Prostate gland (tissue), 2 donors: ENCODE measurements at regions of chr18 and their contacts with region 1.

Region 1: GRCh38 chr18:45014047-45014501 is 333.4 kb downstream of the SETBP1 start:
- DNase-seq: no peak
- H3K4me3 ChIP-seq: no peak overlapping the region
- H3K27ac ChIP-seq: peak overlapping the region in 1 of 2 donors; percentile 8
- H3K4me1 ChIP-seq: no peaks in the 10 kb centered on the region
- H3K27me3 ChIP-seq: no peaks in the 10 kb centered on the region
- CTCF ChIP-seq: peak in 1 of 4 experiments; percentile 8
- POLR2A ChIP-seq: no peak

Region 2: DNA sequence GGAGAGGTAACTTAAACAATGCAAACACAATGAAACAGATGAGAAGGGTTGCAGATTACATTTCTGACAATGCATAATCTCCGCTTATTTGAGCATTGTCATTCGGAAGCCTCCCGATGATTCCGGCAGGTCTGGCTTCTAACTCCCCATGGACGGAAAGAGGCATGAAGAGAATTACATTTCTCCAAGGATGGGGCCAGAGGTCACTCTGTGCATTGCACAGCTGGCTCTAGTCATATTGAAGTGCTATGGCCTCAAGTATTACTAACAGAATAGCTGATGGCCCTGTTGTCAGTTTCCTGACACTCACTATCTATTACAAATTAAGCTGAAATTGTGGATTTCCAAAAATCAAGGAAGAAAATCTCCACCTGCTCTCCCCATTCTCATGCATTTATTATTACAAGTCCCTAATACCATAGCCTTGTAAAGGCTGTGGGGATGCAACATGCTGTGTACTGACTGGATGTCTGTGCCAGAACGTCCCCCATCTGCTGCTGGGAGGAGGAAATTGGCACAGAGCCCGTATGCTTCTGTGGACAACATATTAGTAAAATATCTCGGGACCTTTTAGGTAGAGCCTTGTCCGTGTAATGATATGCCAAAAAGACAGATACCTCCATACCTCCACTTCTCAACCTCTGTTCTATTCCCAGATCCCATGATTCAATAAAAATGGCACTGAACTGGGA is 165.3 kb before region 1 on chr18:
- intact Hi-C with region 1: loop called (anchors 10 kb)
- DNase-seq: no peak
- H3K4me3 ChIP-seq: no peak overlapping the region
- H3K27ac ChIP-seq: no peak overlapping the region
- H3K4me1 ChIP-seq: no peaks in the 10 kb centered on the region
- H3K27me3 ChIP-seq: no peaks in the 10 kb centered on the region
- CTCF ChIP-seq: no peak
- POLR2A ChIP-seq: no peak

Region 3: DNA sequence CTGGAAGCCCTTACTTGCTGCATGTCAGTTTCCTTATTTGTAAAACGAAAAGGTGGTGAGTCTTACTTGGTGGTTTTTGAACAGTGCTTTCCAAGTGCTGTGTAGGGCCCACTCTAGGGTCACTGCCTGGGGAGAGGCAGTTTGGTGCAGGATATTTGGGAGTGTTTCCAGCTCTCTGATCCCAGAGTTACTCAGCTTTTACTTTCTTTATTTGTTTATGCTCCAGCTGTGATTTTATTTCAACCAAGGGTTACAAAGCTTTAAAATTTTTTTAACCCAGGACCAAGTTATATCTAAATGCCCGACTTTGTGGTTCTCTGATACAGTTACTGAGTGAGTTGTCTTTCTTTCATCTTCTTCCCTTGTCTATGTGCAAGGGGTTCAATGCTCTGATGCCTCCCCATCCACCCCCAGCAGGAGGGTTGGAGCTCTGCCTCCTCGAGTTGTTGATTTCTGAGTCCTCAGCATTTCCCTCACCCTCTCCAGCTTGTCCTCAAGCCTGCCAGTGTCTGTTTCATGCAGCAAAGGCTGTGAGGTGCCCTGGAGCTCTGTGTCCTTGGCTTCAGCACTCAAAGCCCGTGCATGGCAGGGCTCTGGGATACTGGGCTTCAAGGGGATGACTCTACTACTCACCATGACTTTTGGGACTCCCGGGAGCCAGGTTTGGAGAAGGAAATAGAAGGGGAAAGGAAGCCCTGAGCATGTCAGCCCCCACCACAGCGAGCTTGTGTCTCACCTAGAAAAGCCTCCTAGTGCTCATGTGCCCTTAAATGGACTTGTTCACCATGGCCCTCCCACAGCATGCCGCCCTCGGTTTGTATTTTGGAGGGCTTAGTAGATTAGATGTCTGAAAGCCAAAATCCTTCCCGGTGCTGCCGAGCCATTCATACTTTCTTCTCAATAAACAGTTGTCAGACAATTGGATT is 96.6 kb before region 1 on chr18:
- intact Hi-C with region 1: loop called (anchors 10 kb)
- DNase-seq: no peak
- H3K4me3 ChIP-seq: no peak overlapping the region
- H3K27ac ChIP-seq: peak overlapping the region; percentile 47 to 51
- H3K4me1 ChIP-seq: no peaks in the 10 kb centered on the region
- H3K27me3 ChIP-seq: no peaks in the 10 kb centered on the region
- CTCF ChIP-seq: no peak
- POLR2A ChIP-seq: no peak

Region 4: GRCh38 chr18:45059695-45060094 is 45.6 kb after region 1 on chr18:
- intact Hi-C with region 1: loop called (anchors 10 kb)
- DNase-seq: no peak
- H3K4me3 ChIP-seq: no peak overlapping the region
- H3K27ac ChIP-seq: no peak overlapping the region
- H3K4me1 ChIP-seq: no peaks in the 10 kb centered on the region
- H3K27me3 ChIP-seq: no peaks in the 10 kb centered on the region
- CTCF ChIP-seq: no peak
- POLR2A ChIP-seq: no peak

Region 5: DNA sequence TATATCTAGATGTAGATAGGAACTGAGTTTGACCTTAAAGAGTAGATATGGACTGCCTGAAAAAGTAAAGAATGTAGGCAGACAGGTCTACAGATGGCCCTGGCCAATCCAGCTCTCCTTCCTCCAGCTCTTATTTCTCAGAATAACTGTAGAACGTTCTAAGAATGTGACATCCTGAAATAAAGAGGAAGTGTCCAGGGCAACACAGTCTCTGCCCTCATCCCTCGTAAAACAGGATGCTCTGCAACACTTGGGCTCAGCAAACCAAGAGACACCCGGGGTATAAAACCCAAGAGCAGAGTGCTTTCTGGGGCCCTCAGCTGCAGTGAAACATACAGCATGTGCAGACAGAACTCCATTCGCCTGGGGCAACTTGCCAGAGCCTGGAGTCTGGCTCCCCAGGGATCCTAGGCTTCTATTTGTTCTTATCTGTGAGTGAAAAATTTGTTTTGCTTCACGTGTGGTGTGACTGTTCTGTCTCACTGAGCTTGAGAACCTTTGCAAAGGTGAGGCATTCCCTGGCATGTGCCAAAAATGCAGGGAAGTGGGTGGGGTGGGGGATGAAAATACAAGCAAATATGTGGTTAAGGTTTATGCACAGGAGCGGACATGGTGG is 67.6 kb after region 1 on chr18:
- intact Hi-C with region 1: loop called (anchors 5 kb)
- DNase-seq: no peak
- H3K4me3 ChIP-seq: no peak overlapping the region
- H3K27ac ChIP-seq: no peak overlapping the region
- H3K4me1 ChIP-seq: no peaks in the 10 kb centered on the region
- H3K27me3 ChIP-seq: no peaks in the 10 kb centered on the region
- CTCF ChIP-seq: no peak
- POLR2A ChIP-seq: no peak

Region 6: DNA sequence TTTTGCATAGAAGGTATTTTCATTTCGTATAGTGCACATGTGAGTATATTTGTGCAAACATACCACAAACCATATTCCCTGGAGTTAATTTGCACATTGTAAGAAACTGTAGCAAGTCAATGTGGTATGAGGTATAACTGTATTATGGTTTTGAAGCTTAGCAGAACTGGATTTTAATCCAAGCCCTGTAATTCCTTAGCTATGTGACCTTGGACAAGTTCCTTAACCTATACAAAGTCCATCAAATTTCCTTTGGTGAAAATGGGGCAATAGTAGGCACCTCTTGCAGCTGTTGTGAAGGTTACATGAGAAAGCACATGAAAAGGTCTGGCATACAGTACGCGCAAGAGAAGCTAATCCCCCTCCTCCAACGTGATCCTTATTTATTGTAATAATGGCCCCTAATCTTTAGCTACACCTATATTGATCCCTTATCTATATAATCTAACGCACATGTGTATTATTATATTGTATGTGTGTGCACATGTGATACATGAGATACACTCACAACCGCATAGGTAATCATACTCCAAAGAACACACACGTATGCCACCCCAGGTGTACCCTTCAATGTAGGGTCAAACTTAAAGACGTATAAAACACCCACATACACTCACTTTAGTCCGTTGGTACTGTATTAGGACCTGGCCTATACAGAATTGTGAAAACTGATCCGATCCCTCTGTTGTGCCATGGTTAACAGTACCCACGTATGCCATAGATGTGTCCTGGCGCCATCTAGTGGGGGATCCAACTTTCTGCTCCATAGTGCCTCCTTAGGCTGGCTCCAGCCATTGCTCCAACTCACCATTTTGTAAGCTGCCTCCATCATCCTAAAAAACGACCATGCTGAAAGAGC is 198.3 kb after region 1 on chr18:
- intact Hi-C with region 1: no loop called
- DNase-seq: peak; percentile 79
- H3K4me3 ChIP-seq: no peak overlapping the region
- H3K27ac ChIP-seq: no peak overlapping the region
- H3K4me1 ChIP-seq: no peaks in the 10 kb centered on the region
- H3K27me3 ChIP-seq: no peaks in the 10 kb centered on the region
- CTCF ChIP-seq: peak; percentile 43 to 84 (median 82)
- POLR2A ChIP-seq: no peak